GM10248 (cell line): ENCODE measurements at regions of chr2 and their contacts with region 1.

Region 1: DNA sequence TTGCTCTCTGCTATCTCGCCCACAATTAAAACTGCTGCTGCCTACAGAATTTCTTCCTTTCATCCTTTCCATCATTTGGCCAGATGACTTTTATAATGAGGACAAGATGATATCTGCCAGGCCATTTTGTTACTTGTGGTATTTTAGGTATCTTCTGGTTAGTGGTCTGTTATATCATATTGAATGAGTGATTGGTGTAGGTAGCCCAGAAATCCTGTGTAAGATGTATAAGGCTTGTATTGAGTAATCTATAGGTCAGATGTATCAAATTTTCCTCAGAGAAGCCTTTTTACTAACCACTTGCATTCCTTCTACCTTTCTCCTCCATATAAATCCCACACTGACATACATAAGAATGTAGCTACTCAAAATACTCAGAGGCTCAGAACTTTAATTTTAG is 118.3 kb downstream of the UBR3 start:
- DNase-seq: no peak
- CTCF ChIP-seq: no peak

Region 2: DNA sequence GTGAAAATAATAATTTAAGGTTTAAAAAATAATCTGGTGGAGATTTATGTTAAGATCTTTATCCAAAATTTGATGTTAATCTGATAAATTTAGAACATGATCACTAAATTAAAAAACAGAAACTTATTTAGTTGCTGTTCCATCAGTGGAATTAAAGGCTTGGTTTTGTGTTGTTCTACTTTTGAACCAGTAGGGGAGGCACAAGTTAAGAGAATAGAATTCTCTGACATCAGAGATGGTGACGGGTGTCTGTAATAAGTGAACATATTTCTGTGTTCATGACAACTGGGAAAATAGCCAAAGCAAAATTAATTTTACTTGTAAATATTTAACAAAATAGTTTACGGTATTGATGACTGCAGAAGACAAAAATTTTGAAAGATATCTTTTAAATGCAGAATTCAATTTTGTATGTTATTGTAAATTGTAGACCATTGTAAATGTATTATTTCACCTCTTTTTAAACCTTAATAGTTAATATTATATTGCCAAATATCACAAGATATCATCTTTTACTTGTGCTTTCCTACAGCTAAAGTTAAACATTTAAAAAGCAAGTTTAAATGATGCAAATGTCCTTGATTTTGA is 12.3 kb before region 1 on chr2:
- CTCF ChIA-PET with region 1: interaction called, 13 read pairs
- POLR2A ChIA-PET with region 1: no interaction called
- DNase-seq: peak; percentile 33
- CTCF ChIP-seq: peak; percentile 54